ENCODE measurements at regions of chr12 and their contacts with region 1.

Region 1: GRCh38 chr12:82685790-82686167 is 927 bp upstream of the TMTC2 start:
- DNase-seq: peak; percentile 73
- ATAC-seq: peak; percentile 77
- H3K4me3 ChIP-seq: peak overlapping the region; percentile 75
- H3K27ac ChIP-seq: peak overlapping the region; percentile 94
- H3K4me1 ChIP-seq: peaks cover 5% of the 10 kb centered on the region
- H3K27me3 ChIP-seq: no peaks in the 10 kb centered on the region
- CTCF ChIP-seq: peak; percentile 83 to 98 (median 89); a peak in 5 of 6 replicates
- EP300 ChIP-seq: no peak
- POLR2A ChIP-seq: no peak
- RAD21 ChIP-seq: peak; percentile 95

Region 2: GRCh38 chr12:82314406-82314892 is 371.3 kb before region 1 on chr12:
- CTCF ChIA-PET with region 1: no interaction called
- POLR2A ChIA-PET with region 1: no interaction called
- RAD21 ChIA-PET with region 1: no interaction called
- SMC1A ChIA-PET with region 1: no interaction called
- in situ Hi-C with region 1: no loop called
- intact Hi-C with region 1: no loop called
- DNase-seq: no peak
- ATAC-seq: no peak; the same call in 2 of the 3 replicates
- H3K4me3 ChIP-seq: no peak overlapping the region
- H3K27ac ChIP-seq: no peak overlapping the region
- H3K4me1 ChIP-seq: no peaks in the 10 kb centered on the region
- H3K27me3 ChIP-seq: no peaks in the 10 kb centered on the region
- CTCF ChIP-seq: no peak
- EP300 ChIP-seq: no peak
- POLR2A ChIP-seq: no peak
- RAD21 ChIP-seq: no peak

Region 3: GRCh38 chr12:82574191-82574590 is 111.6 kb before region 1 on chr12:
- CTCF ChIA-PET with region 1: no interaction called
- POLR2A ChIA-PET with region 1: no interaction called
- RAD21 ChIA-PET with region 1: no interaction called
- SMC1A ChIA-PET with region 1: no interaction called
- in situ Hi-C with region 1: no loop called
- intact Hi-C with region 1: no loop called
- DNase-seq: no peak
- ATAC-seq: no peak
- H3K4me3 ChIP-seq: no peak overlapping the region
- H3K27ac ChIP-seq: no peak overlapping the region
- H3K4me1 ChIP-seq: no peaks in the 10 kb centered on the region
- H3K27me3 ChIP-seq: no peaks in the 10 kb centered on the region
- CTCF ChIP-seq: no peak
- EP300 ChIP-seq: no peak
- POLR2A ChIP-seq: no peak
- RAD21 ChIP-seq: no peak

Region 4: GRCh38 chr12:82650619-82651337 is 35.0 kb before region 1 on chr12:
- CTCF ChIA-PET with region 1: interaction called, 15 read pairs
- POLR2A ChIA-PET with region 1: no interaction called
- RAD21 ChIA-PET with region 1: interaction called, 7 read pairs
- SMC1A ChIA-PET with region 1: interaction called, 7 read pairs
- in situ Hi-C with region 1: no loop called
- intact Hi-C with region 1: no loop called
- DNase-seq: peak; percentile 38
- ATAC-seq: peak; percentile 91
- H3K4me3 ChIP-seq: no peak overlapping the region
- H3K27ac ChIP-seq: no peak overlapping the region
- H3K4me1 ChIP-seq: no peaks in the 10 kb centered on the region
- H3K27me3 ChIP-seq: no peaks in the 10 kb centered on the region
- CTCF ChIP-seq: no peak
- EP300 ChIP-seq: 0 out of 4 replicates have a peak, but pooled peaks of 1 of the 2 experiments have one; percentile 35
- POLR2A ChIP-seq: no peak
- RAD21 ChIP-seq: no peak

Region 5: GRCh38 chr12:82774666-82775065 is 88.9 kb after region 1 on chr12:
- CTCF ChIA-PET with region 1: interaction called, 13 read pairs
- POLR2A ChIA-PET with region 1: no interaction called
- RAD21 ChIA-PET with region 1: no interaction called
- SMC1A ChIA-PET with region 1: interaction called, 3 read pairs
- in situ Hi-C with region 1: no loop called
- intact Hi-C with region 1: no loop called
- DNase-seq: no peak
- ATAC-seq: no peak
- H3K4me3 ChIP-seq: no peak overlapping the region
- H3K27ac ChIP-seq: no peak overlapping the region
- H3K4me1 ChIP-seq: no peaks in the 10 kb centered on the region
- H3K27me3 ChIP-seq: no peaks in the 10 kb centered on the region
- CTCF ChIP-seq: no peak
- EP300 ChIP-seq: no peak
- POLR2A ChIP-seq: no peak
- RAD21 ChIP-seq: no peak

Region 6: GRCh38 chr12:82973592-82973991 is 287.8 kb after region 1 on chr12:
- CTCF ChIA-PET with region 1: interaction called, 5 read pairs
- POLR2A ChIA-PET with region 1: no interaction called
- RAD21 ChIA-PET with region 1: no interaction called
- SMC1A ChIA-PET with region 1: interaction called, 4 read pairs
- in situ Hi-C with region 1: no loop called
- intact Hi-C with region 1: loop called (anchors 10 kb)
- DNase-seq: no peak
- ATAC-seq: no peak
- H3K4me3 ChIP-seq: no peak overlapping the region
- H3K27ac ChIP-seq: no peak overlapping the region
- H3K4me1 ChIP-seq: no peaks in the 10 kb centered on the region
- H3K27me3 ChIP-seq: no peaks in the 10 kb centered on the region
- CTCF ChIP-seq: no peak
- EP300 ChIP-seq: no peak
- POLR2A ChIP-seq: no peak
- RAD21 ChIP-seq: no peak

Region 7: GRCh38 chr12:83261998-83262397 is 576.2 kb after region 1 on chr12:
- CTCF ChIA-PET with region 1: interaction called, 3 read pairs
- POLR2A ChIA-PET with region 1: no interaction called
- RAD21 ChIA-PET with region 1: interaction called, 21 read pairs
- SMC1A ChIA-PET with region 1: interaction called, 11 read pairs
- in situ Hi-C with region 1: no loop called
- intact Hi-C with region 1: no loop called
- DNase-seq: no peak
- ATAC-seq: peak; percentile 73
- H3K4me3 ChIP-seq: no peak overlapping the region
- H3K27ac ChIP-seq: no peak overlapping the region
- H3K4me1 ChIP-seq: no peaks in the 10 kb centered on the region
- H3K27me3 ChIP-seq: no peaks in the 10 kb centered on the region
- CTCF ChIP-seq: peak in 2 of 3 experiments; percentile 19 to 25; a peak in 2 of 6 replicates
- EP300 ChIP-seq: no peak
- POLR2A ChIP-seq: no peak
- RAD21 ChIP-seq: peak; percentile 31; the same call in 1 of the 2 replicates

Region 8: DNA sequence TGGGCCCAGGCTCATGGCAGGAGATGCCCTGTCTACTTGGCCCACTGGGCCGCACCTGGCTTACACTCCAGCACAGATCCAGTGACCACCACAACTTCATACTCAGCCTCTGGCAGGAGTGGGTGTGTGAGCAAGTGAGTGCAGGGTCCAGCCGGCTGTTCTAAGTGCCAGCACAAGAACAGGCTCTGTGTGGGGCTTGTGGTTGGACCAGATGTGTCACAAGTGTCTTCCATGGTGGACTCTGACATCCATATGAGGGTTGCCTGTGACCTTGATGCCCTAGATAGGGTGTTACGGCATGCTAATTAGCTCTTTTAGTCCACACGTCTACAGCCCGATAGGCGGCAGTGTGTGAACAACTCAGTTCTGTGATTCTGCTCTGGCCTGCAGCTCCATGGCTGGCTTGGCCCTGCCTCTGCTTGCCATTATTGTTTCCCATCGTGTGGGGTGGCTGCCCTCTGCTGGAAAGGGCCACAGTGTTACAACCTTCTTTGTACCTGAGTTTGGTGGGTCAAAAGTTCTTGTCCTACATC is 1137.7 kb after region 1 on chr12:
- CTCF ChIA-PET with region 1: interaction called, 120 read pairs
- POLR2A ChIA-PET with region 1: interaction called, 6 read pairs
- RAD21 ChIA-PET with region 1: interaction called, 109 read pairs
- SMC1A ChIA-PET with region 1: interaction called, 34 read pairs
- in situ Hi-C with region 1: loop called (anchors 5 kb)
- intact Hi-C with region 1: loop called (anchors 1 kb)
- DNase-seq: no peak
- ATAC-seq: peak; percentile 97
- H3K4me3 ChIP-seq: no peak overlapping the region
- H3K27ac ChIP-seq: no peak overlapping the region
- H3K4me1 ChIP-seq: no peaks in the 10 kb centered on the region
- H3K27me3 ChIP-seq: no peaks in the 10 kb centered on the region
- CTCF ChIP-seq: peak; percentile 64 to 72 (median 71)
- EP300 ChIP-seq: no peak
- POLR2A ChIP-seq: no peak
- RAD21 ChIP-seq: peak; percentile 79